ENCODE measurements at regions of chr1 and their contacts with region 1.

Region 1: DNA sequence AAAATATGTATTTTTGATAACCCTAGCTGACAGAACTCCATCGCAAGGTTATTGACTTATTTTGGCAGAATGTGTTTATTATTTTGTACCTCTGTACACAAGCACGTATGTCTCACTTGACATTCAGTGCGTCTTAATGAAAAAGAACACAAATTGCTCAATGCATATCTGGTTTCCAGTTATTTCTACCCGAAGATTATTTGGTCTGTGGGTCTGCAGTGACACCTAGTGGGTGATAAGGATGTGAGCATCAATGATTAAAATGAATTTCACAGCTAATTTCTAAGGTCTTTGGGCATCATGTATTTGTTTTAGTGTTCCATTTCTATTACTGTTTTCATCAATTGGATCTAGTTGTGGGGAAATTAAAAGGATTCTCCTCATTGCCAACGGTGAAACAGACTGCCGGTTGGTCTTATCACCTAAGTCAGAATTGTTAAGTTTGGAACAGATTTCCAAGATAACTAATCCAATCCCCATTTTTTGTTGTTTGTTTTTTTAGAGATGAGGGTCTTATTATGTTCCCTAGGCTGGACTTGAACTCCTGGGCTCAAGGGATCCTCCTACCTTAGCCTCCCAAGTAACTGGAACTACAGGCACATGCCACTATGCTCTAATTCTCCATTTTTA is 13.9 kb downstream of the DDX20 start:
- DNase-seq: peak; percentile 66
- H3K4me3 ChIP-seq: no peak overlapping the region
- H3K27ac ChIP-seq: no peak overlapping the region
- H3K4me1 ChIP-seq: no peaks in the 10 kb centered on the region
- H3K27me3 ChIP-seq: no peaks in the 10 kb centered on the region
- CTCF ChIP-seq: peak; percentile 87
- EP300 ChIP-seq: no peak
- RAD21 ChIP-seq: peak; percentile 87

Region 2: GRCh38 chr1:111516005-111516535 is 253.6 kb before region 1 on chr1:
- CTCF ChIA-PET with region 1: interaction called, 10 read pairs
- POLR2A ChIA-PET with region 1: no interaction called
- DNase-seq: no peak
- H3K4me3 ChIP-seq: no peak overlapping the region
- H3K27ac ChIP-seq: no peak overlapping the region
- H3K4me1 ChIP-seq: peaks cover 0 to 8% of the 10 kb centered on the region in 2 experiments; a peak in 1 of 4 replicates
- H3K27me3 ChIP-seq: no peaks in the 10 kb centered on the region
- CTCF ChIP-seq: peak; percentile 19
- EP300 ChIP-seq: no peak
- RAD21 ChIP-seq: no peak

Region 3: GRCh38 chr1:111709986-111710385 is 59.6 kb before region 1 on chr1:
- CTCF ChIA-PET with region 1: interaction called, 52 read pairs
- POLR2A ChIA-PET with region 1: no interaction called
- DNase-seq: no peak
- H3K4me3 ChIP-seq: no peak overlapping the region
- H3K27ac ChIP-seq: no peak overlapping the region
- H3K4me1 ChIP-seq: no peaks in the 10 kb centered on the region; a peak in 2 of 4 replicates
- H3K27me3 ChIP-seq: no peaks in the 10 kb centered on the region
- CTCF ChIP-seq: no peak
- EP300 ChIP-seq: no peak
- RAD21 ChIP-seq: no peak

Region 4: GRCh38 chr1:111725192-111725591 is 44.4 kb before region 1 on chr1:
- CTCF ChIA-PET with region 1: interaction called, 11 read pairs
- POLR2A ChIA-PET with region 1: no interaction called
- DNase-seq: no peak
- H3K4me3 ChIP-seq: no peak overlapping the region
- H3K27ac ChIP-seq: no peak overlapping the region
- H3K4me1 ChIP-seq: no peaks in the 10 kb centered on the region
- H3K27me3 ChIP-seq: no peaks in the 10 kb centered on the region
- CTCF ChIP-seq: no peak
- EP300 ChIP-seq: no peak
- RAD21 ChIP-seq: no peak